ENCODE measurements at regions of chr2 and their contacts with region 1.

Region 1: GRCh38 chr2:218648088-218648786 is 11.2 kb downstream of the ZNF142 start:
- DNase-seq: peak in 1 of 2 experiments; percentile 69
- H3K4me3 ChIP-seq: no peak overlapping the region
- H3K4me1 ChIP-seq: no peaks in the 10 kb centered on the region
- H3K27me3 ChIP-seq: no peaks in the 10 kb centered on the region

Region 2: DNA sequence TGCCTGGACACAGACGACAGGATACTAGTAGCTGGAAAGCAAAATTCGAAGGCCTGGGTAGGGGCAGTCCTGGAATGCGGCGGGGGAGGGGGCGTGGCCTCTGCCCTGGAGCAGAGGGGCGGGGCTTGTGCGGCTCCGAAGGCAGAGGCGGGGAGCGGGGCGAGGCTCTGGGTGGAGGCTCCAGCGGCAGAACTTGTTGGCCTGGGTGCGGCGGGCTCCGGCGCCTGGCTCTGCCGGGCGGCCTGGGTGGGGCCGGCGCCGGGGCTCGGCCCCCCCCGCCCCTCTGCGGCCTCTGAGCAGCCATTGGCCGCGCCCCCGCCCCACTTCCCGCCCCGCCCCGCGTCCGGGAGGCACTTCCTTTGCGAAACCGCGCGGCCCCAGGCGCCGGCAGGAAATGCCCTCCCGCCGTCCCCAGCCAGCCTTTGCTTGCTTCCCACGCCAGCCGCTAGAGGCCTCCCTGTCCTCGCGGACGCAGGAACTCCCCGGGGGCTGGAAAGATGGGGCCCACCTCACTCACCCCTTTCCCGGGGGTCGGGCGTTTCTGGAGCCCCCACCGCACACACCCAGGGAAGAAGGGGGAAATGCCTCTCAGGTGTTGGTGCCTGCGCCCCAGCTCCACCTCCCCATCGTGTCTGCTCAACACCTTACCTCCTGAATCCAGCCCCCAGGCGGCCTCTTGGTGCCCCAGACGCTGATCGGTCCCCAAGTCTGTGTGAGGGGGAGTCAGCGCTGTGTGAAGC is 241.9 kb before region 1 on chr2:
- in situ Hi-C with region 1: loop called (anchors 10 kb)
- DNase-seq: peak; percentile 95 to 99
- H3K4me3 ChIP-seq: peak overlapping the region; percentile 31
- H3K4me1 ChIP-seq: peaks cover 21% of the 10 kb centered on the region
- H3K27me3 ChIP-seq: no peaks in the 10 kb centered on the region

Region 3: GRCh38 chr2:219079417-219079816 is 431.2 kb after region 1 on chr2:
- in situ Hi-C with region 1: no loop called
- DNase-seq: no peak
- H3K4me3 ChIP-seq: no peak overlapping the region
- H3K4me1 ChIP-seq: no peaks in the 10 kb centered on the region
- H3K27me3 ChIP-seq: no peaks in the 10 kb centered on the region

Measured in HAP-1 (cell line).